ENCODE measurements at regions of chr2 and their contacts with region 1.

Region 1: DNA sequence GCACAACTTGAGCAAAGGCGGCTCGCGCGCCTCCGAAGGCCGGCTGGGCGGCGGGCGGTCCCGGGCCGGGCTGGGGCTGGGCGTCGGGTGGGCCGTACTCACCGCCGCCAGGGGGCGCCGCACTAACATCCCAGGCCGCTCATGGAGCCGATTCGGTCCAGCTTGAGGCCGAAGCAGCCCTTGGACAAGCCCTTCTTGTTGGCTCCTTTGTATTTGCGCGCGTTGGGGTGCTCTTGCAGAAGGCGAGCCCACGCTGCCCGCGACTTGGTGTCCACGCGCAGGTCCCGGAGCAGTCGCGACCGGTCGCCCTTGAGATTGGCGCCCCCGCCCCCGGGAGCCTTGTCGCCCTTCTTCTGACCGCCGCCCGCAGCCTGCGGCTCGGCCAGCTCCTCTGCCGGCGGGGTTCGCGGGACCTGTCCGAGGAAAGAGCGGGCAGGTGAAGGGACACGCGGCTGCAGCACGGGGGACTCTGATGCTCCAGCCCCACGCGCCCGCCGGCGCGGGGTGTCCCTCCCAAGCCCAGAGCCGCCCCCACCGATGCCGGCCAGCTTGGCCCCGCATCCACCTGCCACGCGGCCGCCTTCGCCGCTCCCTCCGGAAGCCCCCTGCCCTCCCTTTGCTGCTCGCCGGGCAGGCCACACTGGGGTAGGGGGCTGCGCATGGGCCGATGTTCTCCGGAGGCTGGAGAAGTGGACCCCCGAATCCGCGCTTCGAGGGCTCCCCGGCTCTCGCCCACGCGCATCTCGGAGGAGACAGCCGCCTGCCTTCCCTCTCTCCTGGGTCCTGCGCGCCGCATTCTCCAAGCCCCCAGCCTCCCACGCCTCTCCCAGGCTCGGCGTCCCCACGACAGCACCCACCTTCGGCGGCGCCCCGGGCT is 655 bp downstream of the NPPC start:
- DNase-seq: peak in 4 of 5 donors; percentile 58 to 65 (median 60)
- H3K4me3 ChIP-seq: no peak overlapping the region
- H3K4me3 Mint-ChIP-seq: peak overlapping the region in 5 of 8 donors; percentile 21 to 78 (median 49)
- H3K27ac ChIP-seq: no peak overlapping the region
- H3K27ac Mint-ChIP-seq: no peak overlapping the region
- H3K4me1 ChIP-seq: peaks cover 27% of the 10 kb centered on the region
- H3K4me1 Mint-ChIP-seq: peaks cover 6 to 21% (median 9%) of the 10 kb centered on the region in 4 donors
- H3K27me3 ChIP-seq: peaks cover 19% of the 10 kb centered on the region
- H3K27me3 Mint-ChIP-seq: peaks cover 36 to 51% of the 10 kb centered on the region in 2 donors

Region 2: DNA sequence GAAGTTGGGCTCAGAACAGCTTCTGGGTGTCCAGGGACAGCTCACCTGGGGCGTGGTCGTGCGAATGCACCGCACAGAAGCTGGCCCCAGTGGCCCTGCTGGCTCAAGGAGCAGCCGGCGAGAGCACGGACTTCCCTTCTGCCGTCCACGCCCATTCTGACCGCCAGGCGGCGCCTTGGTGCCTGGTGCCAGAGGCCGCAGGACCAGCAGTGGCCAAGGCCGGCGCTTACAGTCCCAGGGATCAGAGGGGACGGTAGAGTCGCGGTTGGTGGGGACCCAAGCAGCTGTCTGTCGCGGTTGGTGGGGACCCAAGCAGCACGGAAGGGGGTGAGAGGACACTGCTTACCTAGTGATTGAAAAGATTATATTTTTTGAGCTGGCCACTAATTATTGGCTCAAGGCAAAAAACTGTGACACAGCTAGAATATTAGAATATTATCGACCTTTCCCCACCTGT is 25.0 kb before region 1 on chr2:
- CTCF ChIA-PET with region 1: interaction called, 11 read pairs
- POLR2A ChIA-PET with region 1: no interaction called
- intact Hi-C with region 1: no loop called
- DNase-seq: peak in 3 of 5 donors; percentile 13 to 30 (median 22)
- H3K4me3 ChIP-seq: no peak overlapping the region
- H3K4me3 Mint-ChIP-seq: no peak overlapping the region
- H3K27ac ChIP-seq: no peak overlapping the region
- H3K27ac Mint-ChIP-seq: peak overlapping the region in 1 of 7 donors; percentile 25
- H3K4me1 ChIP-seq: no peaks in the 10 kb centered on the region
- H3K4me1 Mint-ChIP-seq: no peaks in the 10 kb centered on the region
- H3K27me3 ChIP-seq: no peaks in the 10 kb centered on the region
- H3K27me3 Mint-ChIP-seq: peaks cover 3 to 4% of the 10 kb centered on the region in 2 donors

Region 3: DNA sequence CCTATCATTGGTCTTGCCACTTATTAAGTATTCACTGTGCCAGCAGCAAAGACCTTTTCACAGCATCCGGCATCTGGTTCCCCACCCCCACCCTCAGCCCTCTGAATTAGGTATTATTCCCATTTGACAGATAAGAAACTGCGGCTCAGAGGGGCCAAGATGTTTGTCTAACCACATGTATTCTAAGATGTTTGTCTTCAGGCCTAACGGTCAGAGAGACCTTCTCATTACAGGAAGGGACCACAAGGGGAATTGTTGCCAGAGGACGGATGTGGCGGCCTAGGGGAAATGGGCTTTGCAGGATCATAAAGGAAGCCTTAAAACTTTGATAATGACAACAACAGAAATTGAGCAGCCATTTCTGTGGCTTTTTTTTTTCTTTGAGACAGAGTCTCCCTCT is 15.9 kb before region 1 on chr2:
- CTCF ChIA-PET with region 1: interaction called, 11 read pairs
- POLR2A ChIA-PET with region 1: no interaction called
- intact Hi-C with region 1: loop called (anchors 1 kb)
- DNase-seq: no peak
- H3K4me3 ChIP-seq: no peak overlapping the region
- H3K4me3 Mint-ChIP-seq: no peak overlapping the region
- H3K27ac ChIP-seq: no peak overlapping the region
- H3K27ac Mint-ChIP-seq: peak overlapping the region in 1 of 7 donors; percentile 55
- H3K4me1 ChIP-seq: no peaks in the 10 kb centered on the region
- H3K4me1 Mint-ChIP-seq: peaks cover 5 to 16% (median 6%) of the 10 kb centered on the region in 4 donors
- H3K27me3 ChIP-seq: no peaks in the 10 kb centered on the region
- H3K27me3 Mint-ChIP-seq: peaks cover 0 to 2% of the 10 kb centered on the region in 2 donors

Region 4: DNA sequence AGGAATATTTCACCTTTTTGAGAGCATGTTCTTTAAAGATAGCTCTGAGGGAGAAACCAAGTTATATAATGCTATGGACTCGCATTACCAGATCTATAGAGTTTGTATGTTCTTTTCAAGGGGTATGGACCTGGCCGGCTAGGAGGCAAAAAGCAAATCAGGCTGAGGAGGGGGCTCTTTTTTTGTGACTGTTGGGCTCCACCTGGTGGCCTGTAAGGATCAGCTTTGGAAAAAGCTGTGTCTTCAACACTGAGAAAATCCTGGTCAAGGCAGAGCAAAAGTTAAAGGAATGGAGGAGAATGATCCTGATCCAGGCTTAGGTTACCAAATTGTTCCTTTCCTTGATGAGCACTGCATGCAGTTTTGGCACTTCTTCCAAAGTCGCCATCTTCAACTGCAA is 216.5 kb after region 1 on chr2:
- CTCF ChIA-PET with region 1: interaction called, 7 read pairs
- POLR2A ChIA-PET with region 1: no interaction called
- intact Hi-C with region 1: loop called (anchors 5 kb)
- DNase-seq: peak in 2 of 5 donors; percentile 4 to 6
- H3K4me3 ChIP-seq: no peak overlapping the region
- H3K4me3 Mint-ChIP-seq: no peak overlapping the region
- H3K27ac ChIP-seq: no peak overlapping the region
- H3K27ac Mint-ChIP-seq: peak overlapping the region in 1 of 7 donors; percentile 8
- H3K4me1 ChIP-seq: peaks cover 13% of the 10 kb centered on the region
- H3K4me1 Mint-ChIP-seq: peaks cover 15 to 21% (median 17%) of the 10 kb centered on the region in 4 donors
- H3K27me3 ChIP-seq: no peaks in the 10 kb centered on the region
- H3K27me3 Mint-ChIP-seq: no peaks in the 10 kb centered on the region

Region 5: DNA sequence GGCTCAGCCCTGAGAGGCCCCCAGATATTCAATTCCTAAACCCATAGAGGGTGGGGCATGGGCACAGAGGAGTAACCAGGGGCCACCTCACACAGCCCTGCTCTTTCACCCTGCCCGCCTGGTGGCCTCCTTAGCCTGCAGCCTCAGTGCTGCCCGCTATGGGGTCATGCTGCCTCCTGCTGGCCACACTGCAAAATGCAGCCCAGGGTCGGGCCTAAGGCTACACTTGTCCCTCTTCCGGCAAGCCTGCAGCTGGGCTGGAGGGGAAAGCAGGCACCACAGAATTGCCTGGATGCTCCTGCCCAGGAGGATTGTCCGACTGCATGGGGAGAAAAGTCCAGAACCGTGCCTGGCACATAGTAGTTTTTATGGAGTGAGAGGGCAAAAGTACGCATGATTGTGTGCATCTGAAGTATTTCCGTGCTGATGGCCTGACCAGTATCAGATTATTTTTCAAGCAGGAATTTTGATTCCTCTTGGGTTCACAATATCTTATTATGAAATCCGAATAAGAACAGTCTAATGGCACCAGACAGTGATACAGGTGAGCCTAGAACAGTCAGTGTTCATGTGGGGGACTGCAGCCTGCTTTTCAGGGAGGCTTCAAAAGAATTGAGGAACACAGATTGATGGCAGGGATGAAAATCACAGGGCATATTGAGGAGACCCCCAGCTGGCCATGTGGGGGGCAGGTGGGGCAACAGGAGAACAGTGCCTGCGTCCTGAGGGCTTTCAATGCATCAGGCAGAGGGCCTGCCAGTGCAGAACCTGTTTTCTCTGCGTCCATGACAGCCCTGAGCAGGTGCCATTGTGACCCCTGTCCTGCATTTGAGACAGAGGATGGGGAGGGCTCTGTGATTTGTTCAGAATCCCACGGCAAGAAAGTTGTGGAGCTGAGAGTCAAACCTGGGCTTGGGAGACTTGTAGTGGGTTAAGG is 401.8 kb after region 1 on chr2:
- CTCF ChIA-PET with region 1: interaction called, 34 read pairs
- POLR2A ChIA-PET with region 1: interaction called, 4 read pairs
- intact Hi-C with region 1: loop called (anchors 1 kb)
- DNase-seq: peak; percentile 73 to 85 (median 77)
- H3K4me3 ChIP-seq: no peak overlapping the region
- H3K4me3 Mint-ChIP-seq: no peak overlapping the region
- H3K27ac ChIP-seq: no peak overlapping the region
- H3K27ac Mint-ChIP-seq: peak overlapping the region in 4 of 7 donors; percentile 41 to 77 (median 52)
- H3K4me1 ChIP-seq: peaks cover 13% of the 10 kb centered on the region
- H3K4me1 Mint-ChIP-seq: peaks cover 6 to 24% (median 10%) of the 10 kb centered on the region in 4 donors
- H3K27me3 ChIP-seq: no peaks in the 10 kb centered on the region
- H3K27me3 Mint-ChIP-seq: no peaks in the 10 kb centered on the region

Region 6: DNA sequence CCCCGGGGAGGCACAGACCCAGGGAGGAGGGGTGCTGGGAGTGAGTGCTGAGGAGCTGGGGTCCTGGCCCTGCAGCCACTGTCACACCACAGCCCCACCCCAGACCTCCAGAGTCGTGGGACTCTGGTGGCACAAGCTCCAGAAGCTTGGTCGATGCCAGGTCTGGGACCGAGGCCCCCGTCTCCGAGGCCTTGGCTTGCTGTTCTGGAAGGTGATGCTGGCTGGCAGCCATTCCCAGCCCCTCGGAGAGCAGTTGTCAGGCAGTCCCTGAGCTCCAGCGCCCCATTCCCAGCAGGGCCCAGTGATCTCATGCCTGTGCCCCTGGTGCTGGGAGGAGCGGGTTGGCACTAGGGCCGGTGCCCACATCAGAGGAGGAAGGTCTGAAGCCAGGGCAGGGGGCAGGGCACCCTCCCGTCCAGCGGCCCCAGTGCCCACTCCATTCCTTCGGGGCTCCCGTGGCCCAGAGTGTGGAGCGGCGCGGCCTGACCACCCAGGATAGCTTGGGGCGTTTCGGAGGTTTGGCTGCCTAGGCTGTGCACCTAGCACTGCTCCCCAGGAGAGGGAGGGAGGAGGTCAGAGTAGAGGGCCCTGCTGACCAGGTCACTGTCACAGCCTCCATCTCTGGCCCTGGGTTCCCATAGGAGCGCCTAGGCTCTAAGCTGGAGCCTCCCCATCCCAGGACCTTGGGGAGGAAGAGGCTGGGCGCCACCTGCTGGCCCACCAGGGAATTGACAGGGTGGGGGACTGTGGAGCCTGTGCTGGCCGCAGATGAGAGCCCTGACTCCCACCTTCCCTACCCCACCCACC is 513.6 kb after region 1 on chr2:
- CTCF ChIA-PET with region 1: interaction called, 3 read pairs
- POLR2A ChIA-PET with region 1: no interaction called
- intact Hi-C with region 1: loop called (anchors 1 kb)
- DNase-seq: peak in 3 of 5 donors; percentile 15 to 34 (median 27)
- H3K4me3 ChIP-seq: no peak overlapping the region
- H3K4me3 Mint-ChIP-seq: no peak overlapping the region
- H3K27ac ChIP-seq: no peak overlapping the region
- H3K27ac Mint-ChIP-seq: no peak overlapping the region
- H3K4me1 ChIP-seq: no peaks in the 10 kb centered on the region
- H3K4me1 Mint-ChIP-seq: peaks cover 2 to 6% (median 3%) of the 10 kb centered on the region in 4 donors
- H3K27me3 ChIP-seq: no peaks in the 10 kb centered on the region
- H3K27me3 Mint-ChIP-seq: peaks cover 3 to 5% of the 10 kb centered on the region in 2 donors